Ascending aorta (tissue), 2 donors: ENCODE measurements at regions of chr9 and their contacts with region 1.

Region 1: GRCh38 chr9:103410059-103410458 is 414.9 kb downstream of the CYLC2 start:
- DNase-seq: no peak
- H3K4me3 ChIP-seq: peak overlapping the region in 1 of 2 donors; percentile 14
- H3K27ac ChIP-seq: peak overlapping the region; percentile 64 to 79
- H3K4me1 ChIP-seq: peaks cover 0 to 14% of the 10 kb centered on the region in 2 donors
- H3K27me3 ChIP-seq: no peaks in the 10 kb centered on the region
- CTCF ChIP-seq: no peak

Region 2: DNA sequence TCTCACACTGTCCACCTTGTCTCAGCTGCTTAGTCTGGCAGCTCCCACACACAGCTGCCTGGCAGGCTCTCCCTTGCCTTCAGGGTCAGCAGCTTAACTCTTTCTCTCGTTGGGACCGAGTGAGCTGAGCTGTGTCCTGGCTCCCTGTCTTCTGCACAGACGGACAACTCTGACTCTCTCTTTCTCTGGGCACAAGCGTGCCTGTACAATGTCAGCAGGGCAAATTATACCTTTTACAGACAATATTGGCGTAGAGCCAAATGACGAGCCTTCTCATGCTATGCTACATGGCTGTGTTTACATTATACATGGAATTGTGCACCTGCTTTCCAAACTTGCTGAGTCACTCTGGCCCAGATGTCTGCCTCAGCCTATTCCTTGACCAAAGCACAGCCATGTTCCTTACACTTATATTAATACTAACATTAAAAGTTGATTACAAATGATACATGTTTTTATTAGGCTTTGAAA is 226.3 kb before region 1 on chr9:
- intact Hi-C with region 1: loop called (anchors 10 kb)
- DNase-seq: no peak
- H3K4me3 ChIP-seq: no peak overlapping the region
- H3K27ac ChIP-seq: no peak overlapping the region
- H3K4me1 ChIP-seq: no peaks in the 10 kb centered on the region
- H3K27me3 ChIP-seq: no peaks in the 10 kb centered on the region
- CTCF ChIP-seq: no peak

Region 3: DNA sequence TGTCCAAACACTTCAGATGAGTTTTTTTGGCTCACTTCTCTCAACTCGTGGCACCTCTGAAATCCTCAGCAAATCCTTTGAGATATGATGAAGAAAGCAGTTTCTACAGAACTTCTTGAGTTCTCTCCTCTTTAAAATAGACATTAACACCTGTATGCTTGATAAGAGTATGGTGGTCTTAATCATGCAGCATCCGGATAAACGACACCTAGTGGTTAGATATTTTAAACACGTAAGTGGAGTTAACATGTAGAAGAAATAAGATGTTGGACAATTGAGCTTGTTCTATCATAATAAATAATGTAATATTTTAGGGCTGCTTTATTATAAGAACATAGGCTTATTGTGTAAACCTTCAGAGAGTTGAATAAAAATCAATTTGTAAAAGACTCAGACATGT is 90.1 kb before region 1 on chr9:
- intact Hi-C with region 1: no loop called
- DNase-seq: no peak
- H3K4me3 ChIP-seq: no peak overlapping the region
- H3K27ac ChIP-seq: no peak overlapping the region
- H3K4me1 ChIP-seq: no peaks in the 10 kb centered on the region
- H3K27me3 ChIP-seq: no peaks in the 10 kb centered on the region
- CTCF ChIP-seq: no peak